Panc1 (cell line): ENCODE measurements at regions of chr7 and their contacts with region 1.

Region 1: DNA sequence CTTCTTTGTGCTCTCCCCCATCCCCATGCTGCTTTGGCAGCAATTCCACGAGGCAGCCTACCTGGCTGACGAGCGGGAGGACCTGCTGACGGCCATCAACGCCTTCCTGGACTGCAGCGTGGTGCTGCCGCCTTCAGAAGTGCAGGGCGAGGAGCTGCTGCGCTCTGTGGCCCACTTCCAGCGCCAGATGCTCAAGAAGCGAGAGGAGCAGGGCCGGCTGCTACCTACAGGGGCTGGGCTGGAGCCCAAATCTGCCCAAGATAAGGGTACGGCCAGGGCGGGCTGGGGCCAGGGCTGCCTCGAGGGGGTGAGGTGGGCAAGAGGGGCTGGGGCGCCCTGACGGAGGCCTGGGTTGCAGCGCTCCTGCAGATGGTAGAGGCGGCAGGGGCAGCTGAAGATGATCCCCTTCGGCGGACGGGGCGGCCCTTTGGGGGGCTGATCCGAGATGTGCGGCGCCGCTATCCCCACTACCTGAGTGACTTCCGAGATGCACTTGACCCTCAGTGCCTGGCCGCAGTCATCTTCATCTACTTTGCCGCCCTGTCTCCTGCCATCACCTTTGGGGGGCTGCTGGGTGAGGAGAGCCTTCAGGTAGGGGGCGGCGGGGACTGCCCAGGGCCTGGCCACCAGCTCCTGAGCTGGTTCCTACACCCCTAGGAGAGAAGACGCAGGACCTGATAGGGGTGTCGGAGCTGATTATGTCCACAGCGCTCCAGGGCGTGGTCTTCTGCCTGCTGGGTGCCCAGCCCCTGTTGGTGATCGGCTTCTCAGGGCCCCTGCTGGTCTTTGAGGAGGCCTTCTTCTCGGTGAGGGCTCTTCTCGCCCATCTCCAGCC is 9.4 kb downstream of the FASTK start:
- DNase-seq: no peak
- ATAC-seq: no peak
- H3K4me3 ChIP-seq: no peak overlapping the region
- H3K27ac ChIP-seq: no peak overlapping the region
- H3K4me1 ChIP-seq: peaks cover 9% of the 10 kb centered on the region
- H3K27me3 ChIP-seq: no peaks in the 10 kb centered on the region
- CTCF ChIP-seq: no peak

Region 2: GRCh38 chr7:150988230-150989226 is 82.7 kb before region 1 on chr7:
- CTCF ChIA-PET with region 1: no interaction called
- POLR2A ChIA-PET with region 1: no interaction called
- in situ Hi-C with region 1: no loop called
- intact Hi-C with region 1: no loop called
- DNase-seq: no peak
- ATAC-seq: peak; percentile 58
- H3K4me3 ChIP-seq: no peak overlapping the region
- H3K27ac ChIP-seq: no peak overlapping the region
- H3K4me1 ChIP-seq: no peaks in the 10 kb centered on the region
- H3K27me3 ChIP-seq: no peaks in the 10 kb centered on the region
- CTCF ChIP-seq: peak; percentile 90

Region 3: GRCh38 chr7:151415375-151416112 is 344.3 kb after region 1 on chr7:
- CTCF ChIA-PET with region 1: no interaction called
- POLR2A ChIA-PET with region 1: interaction called, 13 read pairs
- in situ Hi-C with region 1: no loop called
- intact Hi-C with region 1: no loop called
- DNase-seq: no peak
- ATAC-seq: no peak
- H3K4me3 ChIP-seq: no peak overlapping the region
- H3K27ac ChIP-seq: no peak overlapping the region
- H3K4me1 ChIP-seq: no peaks in the 10 kb centered on the region
- H3K27me3 ChIP-seq: no peaks in the 10 kb centered on the region
- CTCF ChIP-seq: no peak